Gastrocnemius medialis (tissue), 4 donors: ENCODE measurements at regions of chr19 and their contacts with region 1.

Region 1: DNA sequence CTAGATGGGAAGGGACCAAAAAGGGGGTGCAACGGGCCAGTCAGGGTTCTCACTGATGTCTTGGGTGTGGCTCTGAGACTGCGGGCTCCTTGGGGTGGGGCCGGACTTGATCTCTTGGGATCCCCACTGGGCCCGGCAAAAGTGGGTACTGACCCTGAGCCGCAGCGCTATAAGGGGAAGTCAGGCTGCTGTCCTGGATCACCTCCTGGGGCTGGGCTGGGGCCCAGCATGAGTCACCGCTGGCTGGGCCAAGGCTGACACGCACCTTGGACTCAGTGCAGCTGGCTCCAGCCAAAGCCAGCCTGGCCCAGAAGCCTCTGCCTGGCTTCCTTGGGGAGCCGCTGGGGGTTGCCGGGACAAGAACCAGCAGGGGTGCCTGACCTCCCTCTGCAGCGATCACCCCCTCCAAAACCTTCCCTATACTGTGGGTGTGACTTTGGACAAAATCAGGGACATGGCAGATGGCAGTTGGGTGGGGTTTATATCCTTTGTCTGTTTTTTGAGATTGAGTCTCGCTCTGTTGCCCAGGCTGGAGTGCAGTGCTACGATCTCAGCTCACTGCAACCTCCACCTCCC is 617 bp upstream of the IQCN start:
- DNase-seq: peak; percentile 82 to 94
- ATAC-seq: peak; percentile 72 to 77
- H3K4me3 ChIP-seq: peak overlapping the region in 1 of 4 donors; percentile 17
- H3K27ac ChIP-seq: peak overlapping the region; percentile 84 to 99 (median 92)
- H3K4me1 ChIP-seq: peaks cover 40 to 57% of the 10 kb centered on the region in 2 donors
- H3K27me3 ChIP-seq: no peaks in the 10 kb centered on the region
- CTCF ChIP-seq: peak in 3 of 5 experiments; percentile 14 to 32 (median 21)
- POLR2A ChIP-seq: no peak

Region 2: GRCh38 chr19:18224525-18225354 is 50.1 kb before region 1 on chr19:
- in situ Hi-C with region 1: no loop called
- intact Hi-C with region 1: no loop called
- DNase-seq: peak; percentile 97 to 98
- ATAC-seq: peak; percentile 93
- H3K4me3 ChIP-seq: peak overlapping the region; percentile 52 to 71 (median 62)
- H3K27ac ChIP-seq: peak overlapping the region; percentile 72 to 82 (median 76)
- H3K4me1 ChIP-seq: peaks cover 17 to 24% of the 10 kb centered on the region in 2 donors
- H3K27me3 ChIP-seq: peaks cover 0 to 6% (median 0%) of the 10 kb centered on the region in 3 donors
- CTCF ChIP-seq: no peak
- POLR2A ChIP-seq: no peak

Region 3: GRCh38 chr19:18239303-18239702 is 35.6 kb before region 1 on chr19:
- in situ Hi-C with region 1: no loop called
- intact Hi-C with region 1: no loop called
- DNase-seq: no peak
- ATAC-seq: no peak
- H3K4me3 ChIP-seq: no peak overlapping the region
- H3K27ac ChIP-seq: no peak overlapping the region
- H3K4me1 ChIP-seq: no peaks in the 10 kb centered on the region
- H3K27me3 ChIP-seq: no peaks in the 10 kb centered on the region
- CTCF ChIP-seq: no peak
- POLR2A ChIP-seq: no peak

Region 4: DNA sequence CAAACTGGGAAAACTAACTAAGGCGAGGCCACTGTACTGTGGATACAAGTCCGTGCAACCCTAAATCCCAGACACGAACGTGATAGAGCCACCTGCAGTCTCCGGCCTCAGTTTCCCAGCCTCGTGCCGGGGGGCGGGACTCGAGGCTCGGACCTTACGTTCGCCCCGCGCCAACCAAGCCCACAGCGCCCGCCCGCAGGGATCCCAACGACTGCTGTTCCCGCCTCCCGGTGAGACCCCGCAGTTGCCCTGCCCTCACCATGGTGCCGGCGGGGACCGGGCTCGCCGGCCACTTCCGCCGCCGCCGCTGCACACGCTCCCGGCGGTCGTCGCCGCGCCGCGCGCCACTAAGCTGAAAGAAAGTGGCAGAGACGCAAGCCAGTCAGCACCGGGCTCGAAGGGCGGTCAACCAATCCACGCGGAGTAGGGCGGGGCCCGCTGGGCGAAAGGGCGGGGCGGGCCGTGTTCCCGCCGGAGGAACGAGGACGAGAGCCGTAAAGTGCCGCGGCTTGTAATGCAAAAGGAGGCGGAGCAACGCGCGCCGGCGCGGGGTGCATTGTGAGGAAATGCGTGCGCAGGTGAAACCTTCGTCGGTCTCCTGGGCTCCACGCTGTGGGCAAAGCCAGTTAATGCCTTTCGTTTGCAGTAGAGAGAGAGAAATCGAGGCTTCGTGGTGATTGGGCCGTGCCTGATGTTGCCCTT is 48.0 kb after region 1 on chr19 and contains the start of gene LSM4:
- in situ Hi-C with region 1: loop called (anchors 5 kb)
- intact Hi-C with region 1: loop called (anchors 1 kb)
- DNase-seq: peak; percentile 98 to 99
- ATAC-seq: peak; percentile 94 to 97
- H3K4me3 ChIP-seq: peak within 1 kb of the TSS; percentile 81 to 88 (median 82)
- H3K27ac ChIP-seq: peak within 1 kb of the TSS; percentile 91 to 97 (median 95)
- H3K4me1 ChIP-seq: peaks cover 40 to 45% of the 10 kb centered on the region in 2 donors
- H3K27me3 ChIP-seq: no peaks in the 10 kb centered on the region
- CTCF ChIP-seq: peak in 3 of 5 experiments; percentile 20 to 31 (median 25)
- POLR2A ChIP-seq: peak; percentile 90 to 91
- total RNA-seq, gene LSM4: 122 to 294 (median 193) TPM

Region 5: GRCh38 chr19:18328340-18329034 is 53.6 kb after region 1 on chr19:
- in situ Hi-C with region 1: loop called (anchors 5 kb)
- intact Hi-C with region 1: loop called (anchors 1 kb)
- DNase-seq: peak; percentile 92 to 96
- ATAC-seq: peak; percentile 99 to 100
- H3K4me3 ChIP-seq: peak overlapping the region; percentile 6 to 40 (median 34)
- H3K27ac ChIP-seq: peak overlapping the region; percentile 62 to 79 (median 69)
- H3K4me1 ChIP-seq: peaks cover 18 to 24% of the 10 kb centered on the region in 2 donors
- H3K27me3 ChIP-seq: no peaks in the 10 kb centered on the region
- CTCF ChIP-seq: peak; percentile 94 to 98 (median 96)
- POLR2A ChIP-seq: peak; percentile 30 to 77